Aorta (tissue), 5 donors: ENCODE measurements at regions of chr21 and their contacts with region 1.

Region 1: GRCh38 chr21:15729674-15730483 is at the start of gene USP25:
- DNase-seq: peak; percentile 93 to 97
- ATAC-seq: peak; percentile 98
- H3K4me3 ChIP-seq: peak within 1 kb of the TSS; percentile 95 to 98
- H3K27ac ChIP-seq: peak within 1 kb of the TSS; percentile 93 to 94
- H3K4me1 ChIP-seq: peaks cover 0 to 2% of the 10 kb centered on the region in 2 donors
- H3K27me3 ChIP-seq: no peaks in the 10 kb centered on the region
- total RNA-seq, gene USP25: 39.4 to 54.2 TPM

Region 2: DNA sequence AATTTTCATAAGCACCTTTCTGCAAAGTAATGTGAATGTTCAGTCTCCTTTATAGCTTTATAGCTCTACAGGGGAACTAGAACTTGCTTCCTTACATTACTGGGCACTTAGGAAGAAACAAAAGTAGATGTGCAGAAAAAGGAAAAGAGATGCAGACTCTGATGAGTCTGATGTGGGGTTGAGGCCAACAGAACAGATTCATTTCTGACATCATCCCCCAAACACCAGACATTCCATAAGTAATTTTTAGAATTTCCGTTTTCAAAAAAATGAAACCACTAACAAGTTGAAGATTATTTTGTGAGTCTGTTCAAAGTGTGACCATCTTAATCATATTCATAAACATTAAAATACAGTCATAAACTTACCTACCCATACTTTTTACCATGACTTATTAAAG is 761.1 kb before region 1 on chr21:
- intact Hi-C with region 1: no loop called
- DNase-seq: no peak
- ATAC-seq: no peak
- H3K4me3 ChIP-seq: no peak overlapping the region
- H3K27ac ChIP-seq: no peak overlapping the region
- H3K4me1 ChIP-seq: no peaks in the 10 kb centered on the region
- H3K27me3 ChIP-seq: no peaks in the 10 kb centered on the region

Region 3: GRCh38 chr21:15837603-15838002 is 107.7 kb after region 1 on chr21:
- intact Hi-C with region 1: loop called in 1 of 2 experiments (anchors 10 kb)
- DNase-seq: no peak
- ATAC-seq: no peak
- H3K4me3 ChIP-seq: no peak overlapping the region
- H3K27ac ChIP-seq: peak overlapping the region in 1 of 2 donors; percentile 28
- H3K4me1 ChIP-seq: no peaks in the 10 kb centered on the region
- H3K27me3 ChIP-seq: no peaks in the 10 kb centered on the region